ENCODE measurements at regions of chr16 and their contacts with region 1.

Region 1: DNA sequence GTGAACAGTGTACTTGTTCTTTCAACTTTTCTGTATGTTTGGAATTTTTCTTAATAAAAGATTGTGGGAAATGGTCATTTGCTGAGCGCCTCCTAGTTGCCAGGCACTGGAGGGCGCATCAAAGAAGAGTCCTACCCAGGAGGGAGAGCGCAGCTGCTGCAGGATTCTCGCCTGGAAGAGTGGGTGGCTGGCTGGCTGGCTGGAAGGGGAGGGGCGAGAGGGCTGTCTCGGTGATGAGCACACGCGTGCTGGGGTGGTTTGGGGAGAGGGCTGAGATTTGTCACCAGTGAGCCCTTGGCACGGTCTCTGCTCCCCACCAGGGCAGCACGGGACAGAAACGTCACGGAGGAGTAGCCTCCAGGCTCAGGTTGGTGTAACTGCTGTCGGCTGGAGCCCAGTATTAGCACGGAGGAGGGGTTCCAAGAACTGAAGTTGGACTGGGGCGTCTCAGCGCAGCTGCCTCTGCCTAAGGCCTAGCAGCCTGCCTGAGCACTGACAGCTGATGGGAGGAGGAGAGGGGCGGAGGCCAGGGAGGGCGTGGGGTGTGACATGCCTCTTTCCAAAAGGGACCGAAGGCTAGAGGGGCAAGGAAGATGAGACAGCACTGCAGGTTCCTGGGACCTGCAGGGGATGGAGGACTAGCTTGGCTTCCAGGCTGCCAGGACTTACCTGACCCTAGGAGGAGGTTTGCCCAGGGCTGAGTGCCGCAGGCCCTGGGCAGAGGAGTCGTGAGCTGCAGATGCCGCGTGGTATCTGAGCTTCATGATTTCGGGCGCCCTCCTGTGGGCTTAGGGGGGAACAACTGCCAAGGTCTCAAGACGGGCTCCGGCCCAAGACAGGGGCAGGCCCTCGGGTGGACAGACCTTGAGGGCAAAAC is 5.7 kb downstream of the LDHD start:
- ATAC-seq: peak; percentile 74 to 88 (median 84)
- H3K4me3 ChIP-seq: peak overlapping the region in 3 of 5 donors; percentile 4 to 21 (median 20)
- H3K27ac ChIP-seq: peak overlapping the region in 1 of 2 donors; percentile 62
- H3K4me1 ChIP-seq: peaks cover 8 to 15% of the 10 kb centered on the region in 2 donors

Region 2: DNA sequence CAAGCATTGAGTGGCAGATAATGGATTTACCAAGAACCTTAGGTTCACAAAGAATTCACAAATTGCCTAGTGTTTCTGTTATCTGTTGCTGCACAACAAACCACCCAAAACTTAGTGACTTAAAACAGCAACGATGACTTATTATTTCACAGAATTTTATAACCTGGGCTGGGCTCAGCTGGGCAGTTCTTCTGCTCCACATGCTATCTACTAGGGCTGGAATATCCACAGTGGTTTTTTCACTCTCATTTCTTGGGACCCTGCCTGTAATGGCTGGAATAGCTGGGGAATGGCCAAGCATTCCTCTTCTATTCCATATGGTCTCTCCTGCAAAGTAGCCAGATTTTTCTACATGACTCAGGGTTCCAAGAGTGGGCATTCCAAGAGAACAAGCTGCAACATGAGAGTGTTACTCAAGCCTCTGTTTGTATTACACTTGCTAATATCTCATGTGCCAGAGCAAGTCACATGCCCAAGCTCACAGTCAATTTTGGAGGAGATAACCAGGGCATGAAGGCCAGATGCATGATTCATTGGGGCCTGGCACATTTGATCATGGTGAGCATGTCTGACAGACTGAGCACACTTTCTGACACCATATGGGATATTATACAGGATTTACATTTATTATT is 819.2 kb before region 1 on chr16:
- in situ Hi-C with region 1: no loop called
- ATAC-seq: peak in 1 of 8 experiments; percentile 4
- H3K4me3 ChIP-seq: no peak overlapping the region
- H3K27ac ChIP-seq: no peak overlapping the region
- H3K4me1 ChIP-seq: peaks cover 0 to 5% of the 10 kb centered on the region in 2 donors

Region 3: DNA sequence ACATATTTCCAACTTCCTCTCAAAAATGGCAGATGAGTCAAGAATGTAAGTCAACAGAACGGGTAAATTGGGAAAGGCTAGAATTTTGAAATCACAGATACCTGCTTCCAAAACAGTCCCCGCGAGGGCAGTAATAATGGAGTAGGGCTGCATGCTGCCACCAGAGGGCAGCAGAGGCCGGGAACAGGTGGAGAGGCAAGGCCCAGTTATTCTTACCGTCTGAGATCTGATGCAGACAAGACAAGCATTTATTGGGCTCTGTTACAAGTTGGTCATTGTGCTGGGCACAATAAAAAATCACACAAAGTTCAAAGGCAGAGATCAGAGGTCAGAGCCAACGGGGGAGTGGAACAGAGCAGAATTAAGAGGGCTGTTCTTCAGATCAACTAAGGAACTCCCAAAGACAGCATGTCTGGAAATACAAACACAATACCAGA is 401.4 kb before region 1 on chr16:
- in situ Hi-C with region 1: loop called in 1 of 9 experiments (anchors 25 kb)
- ATAC-seq: peak; percentile 92 to 99 (median 98)
- H3K4me3 ChIP-seq: no peak overlapping the region
- H3K27ac ChIP-seq: no peak overlapping the region
- H3K4me1 ChIP-seq: no peaks in the 10 kb centered on the region

Region 4: GRCh38 chr16:74998481-74999218 is 112.2 kb before region 1 on chr16 and contains the start of gene ZNRF1:
- in situ Hi-C with region 1: loop called in 2 of 9 experiments (anchors 10 to 25 kb)
- ATAC-seq: peak; percentile 73 to 81 (median 77)
- H3K4me3 ChIP-seq: peak within 1 kb of the TSS; percentile 54 to 97 (median 64)
- H3K27ac ChIP-seq: peak within 1 kb of the TSS; percentile 90 to 97
- H3K4me1 ChIP-seq: peaks cover 15 to 16% of the 10 kb centered on the region in 2 donors
- total RNA-seq, gene ZNRF1: 7.7 to 20.2 (median 14.2) TPM

Measured in motor neuron (in vitro differentiated cells).